AG04449 (cell line): ENCODE measurements at regions of chr2 and their contacts with region 1.

Region 1: GRCh38 chr2:20190876-20191713 is 33.8 kb downstream of the SDC1 start:
- DNase-seq: no peak
- H3K4me3 ChIP-seq: no peak overlapping the region
- CTCF ChIP-seq: peak; percentile 61

Region 2: DNA sequence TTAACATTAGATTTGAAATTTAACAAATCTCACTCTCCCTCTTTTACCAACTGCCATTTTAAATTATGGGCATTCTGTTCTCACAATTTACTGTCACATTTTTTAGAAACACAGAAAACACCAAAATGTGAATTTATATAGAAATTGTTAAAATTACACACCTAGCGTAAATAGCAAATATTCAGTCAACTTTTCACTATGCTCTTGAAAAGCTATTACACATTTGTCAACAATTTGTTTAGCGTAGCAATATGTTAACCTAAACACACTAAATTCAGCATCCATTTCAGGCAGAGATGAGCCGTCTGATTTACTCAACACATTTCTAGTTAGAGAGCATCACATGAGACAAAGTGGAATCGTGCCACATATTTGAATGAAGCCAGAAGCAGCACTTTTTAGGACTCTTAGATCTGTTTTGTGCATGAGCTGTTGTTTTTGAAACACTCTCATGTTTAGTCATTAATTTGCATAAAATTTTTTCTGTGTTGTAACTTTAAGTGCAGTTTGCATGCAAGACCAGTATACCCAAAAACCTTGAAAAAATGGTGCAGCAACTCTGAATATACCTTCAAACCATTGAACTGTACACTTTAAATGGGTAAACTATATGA is 297.5 kb before region 1 on chr2:
- CTCF ChIA-PET with region 1: no interaction called
- POLR2A ChIA-PET with region 1: no interaction called
- DNase-seq: no peak
- H3K4me3 ChIP-seq: no peak overlapping the region
- CTCF ChIP-seq: no peak

Region 3: GRCh38 chr2:20106746-20107145 is 84.3 kb before region 1 on chr2:
- CTCF ChIA-PET with region 1: interaction called, 25 read pairs
- POLR2A ChIA-PET with region 1: no interaction called
- DNase-seq: no peak
- H3K4me3 ChIP-seq: peak overlapping the region; percentile 25; the same call in 1 of the 2 replicates
- CTCF ChIP-seq: peak; percentile 47

Region 4: GRCh38 chr2:20207051-20207450 is 16.0 kb after region 1 on chr2:
- CTCF ChIA-PET with region 1: interaction called, 47 read pairs
- POLR2A ChIA-PET with region 1: no interaction called
- DNase-seq: no peak
- H3K4me3 ChIP-seq: no peak overlapping the region
- CTCF ChIP-seq: no peak

Region 5: GRCh38 chr2:20254731-20255130 is 63.6 kb after region 1 on chr2:
- CTCF ChIA-PET with region 1: no interaction called
- POLR2A ChIA-PET with region 1: no interaction called
- DNase-seq: no peak
- H3K4me3 ChIP-seq: no peak overlapping the region
- CTCF ChIP-seq: no peak